H1 (cell line): ENCODE measurements at regions of chr20 and their contacts with region 1.

Region 1: GRCh38 chr20:45362804-45363610 is at the start of gene SYS1:
- DNase-seq: peak; percentile 97 to 99
- H3K4me3 ChIP-seq: peak within 1 kb of the TSS; percentile 54 to 98 (median 80)
- H3K27ac ChIP-seq: peak within 1 kb of the TSS; percentile 72
- H3K4me1 ChIP-seq: peaks cover 3 to 12% (median 6%) of the 10 kb centered on the region in 4 experiments; a peak in 6 of 7 replicates
- H3K27me3 ChIP-seq: no peaks in the 10 kb centered on the region
- CTCF ChIP-seq: peak; percentile 70 to 91 (median 83)
- EP300 ChIP-seq: peak in 1 of 2 experiments; percentile 52; a peak in 1 of 3 replicates
- POLR2A ChIP-seq: peak in 1 of 2 experiments; percentile 81; a peak in 2 of 3 replicates
- RAD21 ChIP-seq: peak; percentile 82 to 83
- total RNA-seq, gene SYS1: 18.2 and 19.6 TPM in 2 replicates

Region 2: DNA sequence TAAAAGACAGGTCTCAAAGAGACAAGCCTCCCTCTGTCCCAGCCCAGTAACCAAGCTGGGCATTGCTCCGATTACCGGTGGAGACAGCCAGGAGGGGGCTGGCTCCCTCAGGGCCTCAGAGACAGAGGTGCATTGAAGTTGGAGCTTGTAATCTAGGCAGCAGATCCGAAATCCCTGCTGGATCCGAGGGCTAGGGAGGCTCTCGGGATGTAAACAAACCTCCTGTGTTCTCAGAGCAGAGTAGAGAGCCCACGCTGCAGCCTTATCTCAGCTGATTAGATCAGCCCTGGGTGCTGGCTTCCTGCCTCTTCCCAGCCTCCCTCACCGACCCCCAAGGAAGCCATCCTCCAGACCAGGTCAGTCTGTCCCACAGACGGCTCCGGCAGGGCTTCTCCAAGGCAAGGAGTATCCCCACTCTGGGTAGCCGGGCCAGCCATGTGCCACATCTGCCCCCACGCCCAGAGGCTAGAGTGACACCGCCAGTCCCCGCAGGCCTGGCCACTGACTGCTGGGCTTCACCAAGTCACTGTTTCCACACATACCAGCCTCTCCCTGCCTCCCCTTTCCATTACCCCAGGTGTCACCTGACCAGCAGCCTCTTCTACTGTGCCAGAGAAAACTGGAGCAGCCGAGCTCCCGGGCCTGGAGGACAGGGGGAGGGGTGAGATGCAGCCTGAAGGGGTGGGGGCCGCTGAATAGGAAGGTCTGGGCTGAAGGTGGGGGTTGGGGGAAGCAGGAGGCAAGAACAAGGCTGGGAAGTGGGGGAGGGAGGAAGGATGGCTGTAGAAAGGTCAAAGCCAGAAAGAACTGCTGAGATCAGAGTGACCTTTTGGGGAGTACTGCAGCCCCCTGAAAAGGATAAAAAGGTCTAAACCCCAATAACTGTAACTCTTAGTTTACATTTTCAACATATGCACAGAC is 20.8 kb before region 1 on chr20:
- CTCF ChIA-PET with region 1: interaction called, 26 read pairs
- POLR2A ChIA-PET with region 1: interaction called, 113 read pairs
- DNase-seq: peak in 1 of 2 experiments; percentile 63
- H3K4me3 ChIP-seq: peak overlapping the region; percentile 8 to 51 (median 36)
- H3K27ac ChIP-seq: peak overlapping the region; percentile 89
- H3K4me1 ChIP-seq: peaks cover 46 to 87% (median 62%) of the 10 kb centered on the region in 4 experiments
- H3K27me3 ChIP-seq: no peaks in the 10 kb centered on the region
- CTCF ChIP-seq: no peak
- EP300 ChIP-seq: no peak
- POLR2A ChIP-seq: peak in 1 of 2 experiments; percentile 55; a peak in 2 of 3 replicates
- RAD21 ChIP-seq: 0 out of 4 replicates have a peak, but pooled peaks of 1 of the 2 experiments have one; percentile 7

Region 3: GRCh38 chr20:45347936-45348778 is 14.8 kb before region 1 on chr20 and contains the start of gene SDC4:
- CTCF ChIA-PET with region 1: interaction called, 26 read pairs
- POLR2A ChIA-PET with region 1: interaction called, 113 read pairs
- DNase-seq: peak in 1 of 2 experiments; percentile 63
- H3K4me3 ChIP-seq: peak within 1 kb of the TSS; percentile 68 to 95 (median 72)
- H3K27ac ChIP-seq: peak within 1 kb of the TSS; percentile 10; the same call in 1 of the 2 replicates
- H3K4me1 ChIP-seq: peaks cover 26 to 45% (median 35%) of the 10 kb centered on the region in 4 experiments
- H3K27me3 ChIP-seq: no peaks in the 10 kb centered on the region
- CTCF ChIP-seq: no peak
- EP300 ChIP-seq: no peak
- POLR2A ChIP-seq: peak; percentile 96
- RAD21 ChIP-seq: no peak
- total RNA-seq, gene SDC4: 59.2 and 60.2 TPM in 2 replicates

Region 4: GRCh38 chr20:45415774-45416637 is 53.0 kb after region 1 on chr20 and contains the start of gene PIGT:
- CTCF ChIA-PET with region 1: interaction called, 12 read pairs
- POLR2A ChIA-PET with region 1: interaction called, 3 read pairs
- DNase-seq: peak; percentile 54 to 84
- H3K4me3 ChIP-seq: peak within 1 kb of the TSS; percentile 74 to 89 (median 82)
- H3K27ac ChIP-seq: peak within 1 kb of the TSS; percentile 49
- H3K4me1 ChIP-seq: peaks cover 0 to 5% (median 2%) of the 10 kb centered on the region in 4 experiments; a peak in 3 of 7 replicates
- H3K27me3 ChIP-seq: no peaks in the 10 kb centered on the region
- CTCF ChIP-seq: no peak
- EP300 ChIP-seq: no peak
- POLR2A ChIP-seq: peak; percentile 80 to 87
- RAD21 ChIP-seq: peak; percentile 2 to 13; a peak in 1 of 4 replicates
- total RNA-seq, gene PIGT: 64.3 and 66.0 TPM in 2 replicates